A549 (cell line): ENCODE measurements at regions of chr17 and their contacts with region 1.

Region 1: DNA sequence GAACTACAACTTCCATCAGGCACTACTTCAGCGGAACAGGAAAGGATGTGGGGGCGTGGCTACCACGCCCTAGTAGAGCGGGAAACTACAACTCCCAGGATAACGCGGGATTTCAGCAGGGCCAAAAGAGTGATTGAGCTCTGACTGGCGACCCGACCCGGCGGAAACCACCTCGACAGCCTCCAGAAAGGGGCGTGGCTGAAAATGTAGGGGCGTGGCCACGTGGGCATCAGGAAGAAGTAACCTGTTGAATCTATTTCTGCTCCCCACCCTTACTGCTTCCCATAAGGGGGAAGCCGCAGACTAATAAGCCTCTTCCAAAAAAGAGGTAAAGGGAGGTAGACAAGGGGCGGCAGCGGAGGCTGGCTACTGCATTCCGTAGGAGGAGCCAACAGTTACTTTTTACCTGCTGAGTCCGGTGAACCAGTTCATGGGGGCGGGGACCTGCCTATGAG is at the start of gene TMEM102:
- DNase-seq: peak; percentile 99
- ATAC-seq: peak; percentile 75 to 87
- H3K4me3 ChIP-seq: peak within 1 kb of the TSS; percentile 55
- H3K27ac ChIP-seq: peak within 1 kb of the TSS; percentile 62 to 85
- H3K4me1 ChIP-seq: peaks cover 23% of the 10 kb centered on the region
- CTCF ChIP-seq: no peak
- EP300 ChIP-seq: no peak
- POLR2A ChIP-seq: peak; percentile 16
- RAD21 ChIP-seq: no peak
- polyA plus RNA-seq, gene TMEM102: 4.4 and 4.9 TPM in 2 replicates

Region 2: DNA sequence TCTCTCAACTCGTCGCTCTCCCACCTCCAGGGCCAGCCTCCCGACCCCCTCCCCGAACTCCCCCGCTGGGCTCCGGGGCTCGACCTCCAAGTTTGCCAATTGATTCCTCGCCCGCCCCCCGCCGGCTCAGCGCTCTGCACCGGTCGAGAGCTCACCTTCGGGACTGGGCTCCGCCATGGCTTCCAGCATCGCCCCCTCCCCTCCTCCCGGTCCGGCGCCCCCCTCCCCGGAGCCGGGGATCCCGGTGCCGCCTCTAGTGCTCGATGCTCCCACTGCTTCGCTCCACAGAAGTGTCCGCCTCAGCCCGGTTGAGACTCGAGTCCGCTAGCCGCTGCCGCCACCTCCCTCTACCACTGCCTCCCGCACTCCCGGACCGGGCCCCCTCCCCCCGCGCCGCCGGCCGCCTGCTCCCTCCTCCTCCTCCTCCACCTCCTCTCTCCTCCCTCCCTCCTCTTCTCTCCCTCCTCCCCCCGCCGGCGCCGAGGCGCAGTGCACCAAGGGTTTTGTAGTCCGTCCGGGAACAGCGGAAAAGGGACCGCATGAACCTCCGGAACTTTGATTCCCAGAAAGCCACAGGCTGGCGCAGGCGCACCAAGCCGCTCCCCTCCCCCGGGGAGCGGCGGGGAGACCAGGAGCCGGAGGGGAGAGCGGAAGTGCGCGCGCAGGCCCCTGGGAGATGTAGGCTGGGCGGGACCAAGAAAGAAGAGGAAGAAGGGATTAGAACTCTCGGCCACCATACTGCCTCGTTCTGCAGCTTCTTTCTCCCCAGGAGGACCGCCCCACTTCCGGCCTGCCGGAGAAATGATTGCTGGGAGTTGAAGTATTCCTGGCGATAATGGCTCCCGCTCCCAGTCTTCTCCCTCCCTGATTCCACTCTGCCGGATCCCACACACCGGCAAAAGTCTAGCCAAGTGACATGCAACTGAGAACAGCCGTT is 195.9 kb before region 1 on chr17 and contains the start of gene PHF23:
- CTCF ChIA-PET with region 1: no interaction called
- POLR2A ChIA-PET with region 1: no interaction called
- DNase-seq: peak; percentile 100
- ATAC-seq: peak; percentile 54 to 79
- H3K4me3 ChIP-seq: peak within 1 kb of the TSS; percentile 99
- H3K27ac ChIP-seq: peak within 1 kb of the TSS; percentile 98 to 100
- H3K4me1 ChIP-seq: peaks cover 52% of the 10 kb centered on the region
- CTCF ChIP-seq: no peak
- EP300 ChIP-seq: no peak
- POLR2A ChIP-seq: peak; percentile 70
- RAD21 ChIP-seq: no peak
- polyA plus RNA-seq, gene PHF23: 52.1 and 61.2 TPM in 2 replicates

Region 3: GRCh38 chr17:7383742-7384488 is 51.3 kb before region 1 on chr17:
- CTCF ChIA-PET with region 1: interaction called, 33 read pairs
- POLR2A ChIA-PET with region 1: no interaction called
- DNase-seq: no peak
- ATAC-seq: no peak
- H3K4me3 ChIP-seq: no peak overlapping the region
- H3K27ac ChIP-seq: no peak overlapping the region
- H3K4me1 ChIP-seq: no peaks in the 10 kb centered on the region
- CTCF ChIP-seq: no peak
- EP300 ChIP-seq: no peak
- POLR2A ChIP-seq: no peak
- RAD21 ChIP-seq: no peak

Region 4: GRCh38 chr17:7403977-7404736 is 31.1 kb before region 1 on chr17 and contains the start of gene TMEM256:
- CTCF ChIA-PET with region 1: interaction called, 29 read pairs
- POLR2A ChIA-PET with region 1: interaction called, 13 read pairs
- DNase-seq: peak; percentile 98 to 100
- ATAC-seq: peak; percentile 85 to 97
- H3K4me3 ChIP-seq: peak within 1 kb of the TSS; percentile 88
- H3K27ac ChIP-seq: peak within 1 kb of the TSS; percentile 81 to 92
- H3K4me1 ChIP-seq: peaks cover 28% of the 10 kb centered on the region
- CTCF ChIP-seq: no peak
- EP300 ChIP-seq: no peak
- POLR2A ChIP-seq: peak; percentile 88
- RAD21 ChIP-seq: no peak
- polyA plus RNA-seq, gene TMEM256: 127 and 210 TPM in 2 replicates

Region 5: DNA sequence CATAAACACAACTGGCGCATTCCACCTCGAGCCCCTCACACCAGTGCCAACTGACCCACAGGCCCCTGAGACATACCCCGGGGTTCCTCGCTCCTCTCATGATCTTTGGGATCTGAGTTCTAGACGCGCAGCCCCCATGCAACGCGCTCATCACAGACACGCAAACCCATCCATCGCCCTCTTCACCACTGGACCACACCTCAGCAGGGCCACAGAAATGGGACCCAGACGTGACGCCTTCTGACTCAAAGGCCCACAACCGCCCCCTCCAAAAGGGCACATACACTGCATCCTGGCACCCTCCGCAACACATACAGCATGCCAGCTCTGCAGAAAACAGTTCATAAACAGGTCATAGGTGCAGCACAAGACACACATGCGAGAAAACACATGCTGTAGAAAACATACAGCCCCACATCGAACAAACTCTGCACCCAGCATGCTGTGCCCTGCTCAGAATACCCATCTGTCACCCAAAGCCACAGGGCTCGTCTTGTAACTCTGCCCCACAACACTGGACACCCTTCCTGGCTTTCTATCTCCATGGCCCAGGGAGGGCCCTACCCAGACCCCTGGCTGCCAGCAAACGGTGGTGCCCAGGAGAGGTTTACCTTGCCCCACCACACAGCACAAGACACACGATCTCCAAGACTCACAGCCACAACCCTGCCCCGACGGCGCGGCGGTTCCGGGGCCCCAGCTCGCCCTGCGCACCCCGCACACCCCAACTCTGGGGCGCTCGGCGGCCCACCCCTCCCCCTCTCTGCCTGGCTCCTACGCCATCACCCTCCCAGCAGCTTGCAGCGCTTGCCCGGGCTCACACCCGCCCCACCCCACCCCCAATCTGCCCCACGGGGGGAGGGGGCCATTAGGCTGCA is 43.3 kb after region 1 on chr17:
- CTCF ChIA-PET with region 1: interaction called, 49 read pairs
- POLR2A ChIA-PET with region 1: interaction called, 31 read pairs
- DNase-seq: peak; percentile 50 to 65
- ATAC-seq: peak; percentile 40 to 48
- H3K4me3 ChIP-seq: peak overlapping the region; percentile 82
- H3K27ac ChIP-seq: peak overlapping the region; percentile 94 to 100
- H3K4me1 ChIP-seq: peaks cover 42% of the 10 kb centered on the region
- CTCF ChIP-seq: no peak
- EP300 ChIP-seq: no peak
- POLR2A ChIP-seq: no peak
- RAD21 ChIP-seq: no peak

Region 6: GRCh38 chr17:7491583-7491982 is 56.3 kb after region 1 on chr17:
- CTCF ChIA-PET with region 1: interaction called, 21 read pairs
- POLR2A ChIA-PET with region 1: interaction called, 6 read pairs
- DNase-seq: no peak
- ATAC-seq: no peak
- H3K4me3 ChIP-seq: no peak overlapping the region
- H3K27ac ChIP-seq: no peak overlapping the region
- H3K4me1 ChIP-seq: peaks cover 29% of the 10 kb centered on the region; the same call in 2 of the 3 replicates
- CTCF ChIP-seq: no peak
- EP300 ChIP-seq: no peak
- POLR2A ChIP-seq: no peak
- RAD21 ChIP-seq: no peak

Region 7: GRCh38 chr17:7548585-7549400 is 113.5 kb after region 1 on chr17 and contains the start of gene TNFSF12:
- CTCF ChIA-PET with region 1: interaction called, 13 read pairs
- POLR2A ChIA-PET with region 1: no interaction called
- DNase-seq: peak in 1 of 2 experiments; percentile 42
- ATAC-seq: peak; percentile 89
- H3K4me3 ChIP-seq: peak within 1 kb of the TSS; percentile 63
- H3K27ac ChIP-seq: peak within 1 kb of the TSS; percentile 81 to 90
- H3K4me1 ChIP-seq: peaks cover 17% of the 10 kb centered on the region
- CTCF ChIP-seq: peak; percentile 19; the same call in 1 of the 3 replicates
- EP300 ChIP-seq: no peak
- POLR2A ChIP-seq: peak; percentile 82
- RAD21 ChIP-seq: no peak
- polyA plus RNA-seq, gene TNFSF12: 11.9 and 12.4 TPM in 2 replicates

Region 8: GRCh38 chr17:7956228-7956965 is 521.1 kb after region 1 on chr17:
- CTCF ChIA-PET with region 1: no interaction called
- POLR2A ChIA-PET with region 1: no interaction called
- DNase-seq: no peak
- ATAC-seq: no peak
- H3K4me3 ChIP-seq: no peak overlapping the region
- H3K27ac ChIP-seq: no peak overlapping the region
- H3K4me1 ChIP-seq: no peaks in the 10 kb centered on the region
- CTCF ChIP-seq: no peak
- EP300 ChIP-seq: no peak
- POLR2A ChIP-seq: no peak
- RAD21 ChIP-seq: no peak